ENCODE measurements at regions of chr5 and their contacts with region 1.

Region 1: DNA sequence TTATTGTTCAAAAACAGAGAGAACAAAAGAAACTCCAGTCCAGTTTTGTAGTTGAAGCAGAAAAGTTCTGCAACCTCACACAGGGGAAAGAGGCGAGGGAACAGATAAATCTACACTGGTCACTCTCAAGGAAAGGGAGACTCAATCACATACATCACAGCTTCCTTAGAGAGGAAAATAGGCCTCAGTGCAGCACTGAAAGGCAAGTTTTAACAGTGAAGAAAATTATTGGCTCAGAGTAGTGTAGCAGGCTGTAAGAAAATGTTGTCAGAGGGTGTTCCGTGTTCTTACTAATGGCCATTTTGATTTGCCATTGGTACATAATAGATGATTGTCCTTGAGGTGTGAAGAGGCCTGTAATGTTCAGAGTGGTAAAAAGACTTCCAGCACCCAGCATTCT is 530.0 kb upstream of the CDH6 start:
- DNase-seq: no peak
- H3K4me3 ChIP-seq: no peak overlapping the region
- H3K27ac ChIP-seq: no peak overlapping the region
- H3K4me1 ChIP-seq: no peaks in the 10 kb centered on the region
- CTCF ChIP-seq: no peak

Region 2: DNA sequence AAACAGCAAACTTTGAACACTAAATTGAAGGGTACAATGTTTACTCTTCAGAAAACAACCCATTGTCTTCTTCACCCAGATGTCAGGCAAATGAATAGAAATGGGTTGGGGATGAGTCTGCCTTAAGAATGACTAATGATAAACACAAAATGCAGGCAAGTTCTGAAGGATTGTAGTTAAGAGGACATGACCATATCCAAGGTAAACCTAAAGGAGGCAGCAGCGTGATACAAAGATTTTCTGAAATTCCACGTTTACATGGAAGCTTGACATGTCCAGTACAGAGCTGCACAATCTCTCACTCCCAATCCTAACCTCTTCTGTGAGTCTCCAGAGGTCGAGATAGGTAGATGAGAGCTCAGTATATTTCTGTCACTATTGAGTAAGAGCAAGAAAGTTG is 733.2 kb before region 1 on chr5:
- CTCF ChIA-PET with region 1: no interaction called
- POLR2A ChIA-PET with region 1: no interaction called
- intact Hi-C with region 1: no loop called
- DNase-seq: no peak
- H3K4me3 ChIP-seq: no peak overlapping the region
- H3K27ac ChIP-seq: no peak overlapping the region
- H3K4me1 ChIP-seq: no peaks in the 10 kb centered on the region
- CTCF ChIP-seq: no peak

Region 3: GRCh38 chr5:30413540-30413939 is 250.0 kb before region 1 on chr5:
- CTCF ChIA-PET with region 1: no interaction called
- POLR2A ChIA-PET with region 1: no interaction called
- intact Hi-C with region 1: no loop called
- DNase-seq: no peak
- H3K4me3 ChIP-seq: no peak overlapping the region
- H3K27ac ChIP-seq: no peak overlapping the region
- H3K4me1 ChIP-seq: no peaks in the 10 kb centered on the region
- CTCF ChIP-seq: no peak

Region 4: GRCh38 chr5:30608501-30608900 is 55.0 kb before region 1 on chr5:
- CTCF ChIA-PET with region 1: no interaction called
- POLR2A ChIA-PET with region 1: no interaction called
- intact Hi-C with region 1: no loop called
- DNase-seq: no peak
- H3K4me3 ChIP-seq: no peak overlapping the region
- H3K27ac ChIP-seq: no peak overlapping the region
- H3K4me1 ChIP-seq: no peaks in the 10 kb centered on the region
- CTCF ChIP-seq: no peak

Region 5: DNA sequence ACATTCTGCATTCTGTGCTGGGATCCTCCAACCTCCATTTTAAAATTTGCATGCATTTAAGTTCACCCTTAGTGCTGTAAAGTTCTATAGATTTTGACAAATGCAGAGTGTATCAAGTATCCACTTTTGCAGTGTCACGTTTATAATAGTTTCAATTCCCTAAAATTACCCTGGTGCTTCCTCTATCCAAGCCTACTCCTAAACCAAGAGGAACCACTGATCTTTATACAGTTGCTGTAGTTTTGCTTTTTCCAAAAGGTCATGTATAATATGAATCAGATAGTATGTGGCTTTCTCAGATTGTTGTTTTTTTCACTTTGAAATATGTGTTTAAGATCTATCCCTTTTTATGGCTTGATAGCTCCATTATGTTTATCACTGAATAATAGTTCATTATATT is 61.5 kb after region 1 on chr5:
- CTCF ChIA-PET with region 1: no interaction called
- POLR2A ChIA-PET with region 1: no interaction called
- intact Hi-C with region 1: loop called (anchors 2 kb)
- DNase-seq: no peak
- H3K4me3 ChIP-seq: no peak overlapping the region
- H3K27ac ChIP-seq: no peak overlapping the region
- H3K4me1 ChIP-seq: no peaks in the 10 kb centered on the region
- CTCF ChIP-seq: no peak